Naive thymus-derived CD4-positive, alpha-beta T cell (primary cell): ENCODE measurements at regions of chr20 and their contacts with region 1.

Region 1: GRCh38 chr20:45934586-45935415 is at the start of gene PCIF1:
- DNase-seq: peak; percentile 98 to 99 (median 99)
- ATAC-seq: peak; percentile 87
- H3K4me3 ChIP-seq: peak within 1 kb of the TSS; percentile 96
- H3K4me3 Mint-ChIP-seq: peak within 1 kb of the TSS; percentile 85 to 99 (median 98)
- H3K27ac ChIP-seq: peak within 1 kb of the TSS; percentile 96
- H3K27ac Mint-ChIP-seq: peak within 1 kb of the TSS; percentile 95 to 99 (median 98)
- H3K4me1 ChIP-seq: peaks cover 10 to 21% of the 10 kb centered on the region in 2 donors
- H3K4me1 Mint-ChIP-seq: peaks cover 8 to 37% (median 33%) of the 10 kb centered on the region in 7 donors
- H3K27me3 ChIP-seq: no peaks in the 10 kb centered on the region
- H3K27me3 Mint-ChIP-seq: no peaks in the 10 kb centered on the region
- total RNA-seq, gene PCIF1: 42.3 to 79.6 (median 67.0) TPM

Region 2: DNA sequence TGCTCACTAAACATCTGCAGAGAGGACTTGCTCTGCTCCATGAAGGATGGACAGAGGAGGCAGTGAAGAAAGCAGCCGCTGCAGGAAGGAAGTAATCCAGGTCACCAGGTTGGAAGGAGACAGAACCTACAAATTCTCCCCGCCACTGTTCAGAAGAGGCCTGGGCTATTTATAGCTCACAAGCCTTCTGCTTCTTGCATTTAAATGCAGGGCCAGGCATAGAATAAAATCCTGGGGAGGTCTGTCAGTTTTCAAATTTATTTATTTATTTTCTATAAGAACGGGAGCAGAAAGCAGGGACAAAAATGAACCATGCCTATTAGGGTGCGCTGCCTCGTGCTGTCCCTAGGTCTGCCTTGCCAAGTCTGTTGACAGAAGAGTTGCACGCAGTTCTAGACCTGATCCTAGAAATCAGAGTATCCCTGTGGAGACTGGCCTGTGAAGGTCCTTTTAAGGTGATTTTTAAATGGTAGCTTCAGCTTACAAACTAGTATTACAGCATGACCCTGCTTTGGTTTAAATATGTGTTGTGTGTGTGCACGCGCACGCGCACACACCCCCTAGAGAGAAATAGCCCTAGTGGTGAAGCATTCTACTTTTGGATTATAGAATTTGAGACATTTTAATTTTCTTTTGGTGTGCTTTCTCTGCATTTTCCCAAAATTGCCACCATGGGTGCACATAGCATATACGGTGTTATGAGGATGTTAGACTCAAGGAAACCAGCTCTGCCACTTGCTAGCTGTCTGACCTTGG is 1144.0 kb before region 1 on chr20:
- CTCF ChIA-PET with region 1: no interaction called
- POLR2A ChIA-PET with region 1: no interaction called
- intact Hi-C with region 1: no loop called
- DNase-seq: no peak
- ATAC-seq: no peak
- H3K4me3 ChIP-seq: no peak overlapping the region
- H3K4me3 Mint-ChIP-seq: no peak overlapping the region
- H3K27ac ChIP-seq: no peak overlapping the region
- H3K27ac Mint-ChIP-seq: no peak overlapping the region
- H3K4me1 ChIP-seq: no peaks in the 10 kb centered on the region
- H3K4me1 Mint-ChIP-seq: no peaks in the 10 kb centered on the region
- H3K27me3 ChIP-seq: no peaks in the 10 kb centered on the region
- H3K27me3 Mint-ChIP-seq: peaks cover 6 to 21% (median 15%) of the 10 kb centered on the region in 5 donors

Region 3: DNA sequence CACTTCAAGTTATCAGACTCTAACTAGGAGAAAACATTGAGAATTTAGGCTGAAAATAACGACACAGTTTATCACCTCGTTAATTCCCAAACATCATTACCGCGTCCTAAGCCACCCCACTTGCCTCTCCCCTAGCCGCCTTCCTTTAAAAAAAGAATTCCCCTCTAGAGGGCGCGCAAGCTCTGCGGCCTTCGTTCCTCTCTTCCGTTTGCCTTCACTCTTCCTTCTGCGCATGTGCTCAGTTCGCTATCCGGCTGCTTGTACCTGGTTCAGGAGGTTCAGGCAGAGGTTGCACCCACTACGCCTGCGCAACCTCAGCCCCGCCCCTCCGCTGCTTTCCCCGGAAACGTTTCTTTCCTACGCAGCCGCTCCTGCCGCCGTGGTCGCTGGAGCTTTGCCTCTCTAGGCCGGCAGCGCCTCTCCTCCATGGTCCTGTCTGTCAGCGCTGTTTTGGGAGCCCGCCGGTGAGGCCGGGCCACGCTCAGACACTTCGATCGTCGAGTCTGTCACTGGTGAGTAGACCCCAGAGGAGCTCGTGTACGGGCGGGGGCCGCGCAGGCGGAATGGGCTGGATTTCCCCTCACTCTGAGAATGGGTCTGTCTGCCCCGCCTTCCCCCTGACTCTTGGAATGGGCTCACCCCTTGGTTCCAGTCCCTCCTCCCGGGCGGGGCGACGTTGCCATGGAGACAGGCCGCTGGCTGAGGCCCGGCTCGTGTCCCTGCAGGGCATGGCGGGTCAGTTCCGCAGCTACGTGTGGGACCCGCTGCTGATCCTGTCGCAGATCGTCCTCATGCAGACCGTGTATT is 571.8 kb before region 1 on chr20 and contains the start of gene SYS1:
- CTCF ChIA-PET with region 1: no interaction called
- POLR2A ChIA-PET with region 1: interaction called, 4 read pairs
- intact Hi-C with region 1: loop called in 1 of 2 experiments (anchors 1 kb)
- DNase-seq: peak; percentile 97 to 99 (median 99)
- ATAC-seq: peak; percentile 90
- H3K4me3 ChIP-seq: peak within 1 kb of the TSS; percentile 92
- H3K4me3 Mint-ChIP-seq: peak within 1 kb of the TSS; percentile 83 to 100 (median 97)
- H3K27ac ChIP-seq: peak within 1 kb of the TSS; percentile 99
- H3K27ac Mint-ChIP-seq: peak within 1 kb of the TSS; percentile 92 to 100 (median 99)
- H3K4me1 ChIP-seq: peaks cover 24 to 30% of the 10 kb centered on the region in 2 donors
- H3K4me1 Mint-ChIP-seq: peaks cover 24 to 56% (median 47%) of the 10 kb centered on the region in 7 donors
- H3K27me3 ChIP-seq: no peaks in the 10 kb centered on the region
- H3K27me3 Mint-ChIP-seq: peaks cover 0 to 2% (median 0%) of the 10 kb centered on the region in 5 donors
- total RNA-seq, gene SYS1: 23.9 to 111 (median 67.1) TPM

Region 4: GRCh38 chr20:45812157-45813020 is 122.4 kb before region 1 on chr20 and contains the start of gene UBE2C:
- CTCF ChIA-PET with region 1: no interaction called
- POLR2A ChIA-PET with region 1: no interaction called
- intact Hi-C with region 1: loop called (anchors 1 to 2 kb)
- DNase-seq: peak; percentile 73 to 95 (median 92)
- ATAC-seq: peak; percentile 100
- H3K4me3 ChIP-seq: peak within 1 kb of the TSS; percentile 52
- H3K4me3 Mint-ChIP-seq: peak within 1 kb of the TSS; percentile 79 to 96 (median 84)
- H3K27ac ChIP-seq: peak within 1 kb of the TSS; percentile 63
- H3K27ac Mint-ChIP-seq: peak within 1 kb of the TSS; percentile 36 to 87 (median 71)
- H3K4me1 ChIP-seq: peaks cover 0 to 12% of the 10 kb centered on the region in 2 donors
- H3K4me1 Mint-ChIP-seq: peaks cover 3 to 42% (median 16%) of the 10 kb centered on the region in 7 donors
- H3K27me3 ChIP-seq: no peaks in the 10 kb centered on the region
- H3K27me3 Mint-ChIP-seq: no peaks in the 10 kb centered on the region
- total RNA-seq, gene UBE2C: 0.50 to 129 (median 0.75) TPM in 4 of 5 experiments, not detected in the other

Region 5: DNA sequence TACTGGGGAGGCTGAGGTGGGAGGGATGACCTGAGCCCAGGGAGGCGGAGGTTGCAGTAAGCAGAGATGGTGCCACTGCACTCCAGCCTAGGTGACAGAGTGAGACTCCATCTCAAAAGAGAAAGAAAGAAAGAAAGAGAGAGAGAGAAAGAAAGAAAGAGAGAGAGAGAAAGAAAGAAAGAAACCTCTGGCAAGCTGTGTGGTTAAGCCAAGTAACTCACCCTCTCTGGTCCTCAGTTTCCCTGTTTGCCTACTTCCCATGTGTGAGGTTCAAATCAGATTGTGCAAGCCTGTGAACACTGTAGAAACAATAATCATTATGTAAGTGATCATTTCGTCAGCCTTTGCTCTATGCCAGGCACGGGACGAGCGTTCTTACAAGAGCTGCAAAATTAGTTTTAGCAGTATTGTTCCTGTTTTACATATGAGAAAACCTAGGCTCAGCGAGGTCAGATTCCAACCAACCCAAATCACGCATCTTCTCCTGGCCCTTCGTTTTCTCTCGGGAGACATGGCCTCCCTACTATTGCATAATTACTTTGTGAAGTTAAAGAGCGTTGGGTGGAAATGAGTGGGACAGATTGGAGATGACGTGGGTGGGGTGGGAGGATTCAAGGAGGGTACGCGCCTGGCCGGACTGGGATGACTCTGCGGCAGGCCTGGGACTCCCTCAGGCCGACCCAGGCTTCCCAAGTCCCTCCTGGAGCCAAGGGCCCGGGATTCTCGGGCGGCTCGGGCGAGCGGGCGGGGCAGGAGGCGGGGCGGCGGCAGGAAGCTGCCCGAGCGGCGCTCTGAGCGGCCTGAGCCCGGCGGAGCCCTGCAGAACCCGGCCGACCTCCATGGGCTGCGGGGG is 101.5 kb before region 1 on chr20 and contains the start of gene SNX21:
- CTCF ChIA-PET with region 1: no interaction called
- POLR2A ChIA-PET with region 1: no interaction called
- intact Hi-C with region 1: no loop called
- DNase-seq: peak in 6 of 9 donors; percentile 20 to 44 (median 22)
- ATAC-seq: peak; percentile 68
- H3K4me3 ChIP-seq: peak within 1 kb of the TSS; percentile 61
- H3K4me3 Mint-ChIP-seq: peak within 1 kb of the TSS; percentile 81 to 95 (median 88)
- H3K27ac ChIP-seq: peak within 1 kb of the TSS; percentile 59
- H3K27ac Mint-ChIP-seq: peak within 1 kb of the TSS in 8 of 9 donors; percentile 26 to 90 (median 80)
- H3K4me1 ChIP-seq: peaks cover 4 to 5% of the 10 kb centered on the region in 2 donors
- H3K4me1 Mint-ChIP-seq: peaks cover 6 to 14% (median 9%) of the 10 kb centered on the region in 7 donors
- H3K27me3 ChIP-seq: no peaks in the 10 kb centered on the region
- H3K27me3 Mint-ChIP-seq: peaks cover 0 to 20% (median 0%) of the 10 kb centered on the region in 5 donors
- total RNA-seq, gene SNX21: 0.93 to 4.9 (median 1.5) TPM

Region 6: DNA sequence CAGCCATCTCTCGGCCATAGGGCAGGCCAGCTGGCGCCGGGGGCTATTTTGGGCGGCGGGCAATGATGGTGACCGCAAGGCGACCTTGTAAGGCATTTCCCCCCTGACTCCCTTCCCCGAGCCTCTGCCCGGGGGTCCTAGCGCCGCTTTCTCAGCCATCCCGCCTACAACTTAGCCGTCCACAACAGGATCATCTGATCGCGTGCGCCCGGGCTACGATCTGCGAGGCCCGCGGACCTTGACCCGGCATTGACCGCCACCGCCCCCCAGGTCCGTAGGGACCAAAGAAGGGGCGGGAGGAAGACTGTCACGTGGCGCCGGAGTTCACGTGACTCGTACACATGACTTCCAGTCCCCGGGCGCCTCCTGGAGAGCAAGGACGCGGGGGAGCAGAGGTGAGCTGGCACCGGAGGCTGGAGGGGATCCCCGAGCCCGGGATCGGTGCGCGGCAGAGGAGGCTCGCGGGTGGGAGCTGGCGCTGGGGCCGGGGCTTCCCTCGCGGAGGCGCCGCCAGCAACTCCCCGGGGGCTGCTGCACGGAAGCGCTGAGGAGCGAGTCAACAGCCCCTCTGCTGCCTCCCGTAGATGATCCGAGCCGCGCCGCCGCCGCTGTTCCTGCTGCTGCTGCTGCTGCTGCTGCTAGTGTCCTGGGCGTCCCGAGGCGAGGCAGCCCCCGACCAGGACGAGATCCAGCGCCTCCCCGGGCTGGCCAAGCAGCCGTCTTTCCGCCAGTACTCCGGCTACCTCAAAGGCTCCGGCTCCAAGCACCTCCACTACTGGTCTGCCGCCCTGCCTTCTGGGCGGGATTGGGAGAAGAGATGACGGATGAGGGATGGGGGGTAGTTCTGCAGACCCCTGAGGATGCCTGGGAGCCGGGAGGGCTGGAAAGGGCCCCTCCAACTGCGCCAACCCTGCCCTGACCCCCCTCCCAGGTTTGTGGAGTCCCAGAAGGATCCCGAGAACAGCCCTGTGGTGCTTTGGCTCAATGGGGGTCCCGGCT is 43.5 kb before region 1 on chr20 and contains the starts of genes CTSA and NEURL2:
- CTCF ChIA-PET with region 1: interaction called, 8 read pairs
- POLR2A ChIA-PET with region 1: interaction called, 65 read pairs
- intact Hi-C with region 1: loop called (anchors 1 kb)
- DNase-seq: peak; percentile 62 to 90 (median 83)
- ATAC-seq: peak; percentile 87
- H3K4me3 ChIP-seq: peak within 1 kb of the TSS; percentile 96
- H3K4me3 Mint-ChIP-seq: peak within 1 kb of the TSS; percentile 88 to 95 (median 93)
- H3K27ac ChIP-seq: peak within 1 kb of the TSS; percentile 76
- H3K27ac Mint-ChIP-seq: peak within 1 kb of the TSS; percentile 85 to 97 (median 90)
- H3K4me1 ChIP-seq: peaks cover 22 to 25% of the 10 kb centered on the region in 2 donors
- H3K4me1 Mint-ChIP-seq: peaks cover 17 to 37% (median 26%) of the 10 kb centered on the region in 7 donors
- H3K27me3 ChIP-seq: no peaks in the 10 kb centered on the region
- H3K27me3 Mint-ChIP-seq: no peaks in the 10 kb centered on the region
- total RNA-seq, gene CTSA: 60.5 to 151 (median 65.1) TPM
- total RNA-seq, gene NEURL2: 1.2 to 5.3 (median 4.0) TPM

Region 7: GRCh38 chr20:45946149-45946970 is 11.6 kb after region 1 on chr20:
- CTCF ChIA-PET with region 1: no interaction called
- POLR2A ChIA-PET with region 1: interaction called, 55 read pairs
- intact Hi-C with region 1: no loop called
- DNase-seq: no peak
- ATAC-seq: peak; percentile 72
- H3K4me3 ChIP-seq: no peak overlapping the region
- H3K4me3 Mint-ChIP-seq: peak overlapping the region in 1 of 10 donors; percentile 25
- H3K27ac ChIP-seq: no peak overlapping the region
- H3K27ac Mint-ChIP-seq: peak overlapping the region in 4 of 9 donors; percentile 7 to 62 (median 47)
- H3K4me1 ChIP-seq: no peaks in the 10 kb centered on the region
- H3K4me1 Mint-ChIP-seq: peaks cover 0 to 13% (median 0%) of the 10 kb centered on the region in 7 donors
- H3K27me3 ChIP-seq: no peaks in the 10 kb centered on the region
- H3K27me3 Mint-ChIP-seq: no peaks in the 10 kb centered on the region

Region 8: DNA sequence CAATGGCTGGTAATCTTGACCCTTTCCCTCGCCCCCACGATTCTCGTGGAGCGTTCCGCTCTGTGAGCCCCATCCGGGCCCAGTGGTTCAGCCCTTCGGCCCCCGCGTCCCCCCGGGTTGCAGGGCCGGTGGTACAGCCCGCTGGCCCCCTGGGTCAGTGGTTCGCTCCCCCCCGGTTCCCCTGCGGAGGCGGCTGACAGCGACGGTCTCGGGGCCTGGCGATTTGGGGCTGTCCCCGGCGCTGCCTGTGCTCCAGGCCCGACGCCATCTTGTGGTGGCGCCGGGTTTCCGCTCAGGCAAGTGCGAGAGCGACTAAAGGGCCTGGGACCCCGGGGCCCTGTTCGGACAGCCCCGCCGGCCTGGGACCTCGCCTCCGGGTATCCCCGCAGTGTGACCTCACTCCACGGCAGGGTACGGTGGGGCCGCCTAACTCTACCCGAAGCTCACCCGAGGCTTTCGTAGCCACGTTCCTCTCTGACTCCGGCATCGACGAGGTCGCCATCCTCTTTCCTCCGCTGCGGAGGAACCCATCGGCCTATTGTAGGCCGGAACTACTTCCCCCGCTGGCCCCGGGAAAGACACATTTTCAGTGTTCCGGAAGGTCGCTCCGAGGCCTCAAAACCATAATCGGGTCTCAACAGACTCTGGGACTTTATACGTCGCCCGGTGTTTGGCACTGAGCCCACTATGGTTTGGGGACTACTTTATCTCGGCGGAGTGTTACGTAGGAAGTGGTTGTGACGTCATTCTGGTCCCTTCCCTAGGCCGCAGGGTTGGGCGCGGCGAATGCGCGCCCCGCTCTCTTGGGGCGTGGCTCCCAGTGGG is 37.1 kb after region 1 on chr20 and contains the start of gene ZNF335:
- CTCF ChIA-PET with region 1: interaction called, 54 read pairs
- POLR2A ChIA-PET with region 1: interaction called, 174 read pairs
- intact Hi-C with region 1: loop called (anchors 1 kb)
- DNase-seq: peak; percentile 89 to 99 (median 96)
- ATAC-seq: peak; percentile 89
- H3K4me3 ChIP-seq: peak within 1 kb of the TSS; percentile 74
- H3K4me3 Mint-ChIP-seq: peak within 1 kb of the TSS; percentile 80 to 100 (median 92)
- H3K27ac ChIP-seq: peak within 1 kb of the TSS; percentile 98
- H3K27ac Mint-ChIP-seq: peak within 1 kb of the TSS; percentile 99 to 100 (median 100)
- H3K4me1 ChIP-seq: peaks cover 24 to 26% of the 10 kb centered on the region in 2 donors
- H3K4me1 Mint-ChIP-seq: peaks cover 17 to 27% (median 24%) of the 10 kb centered on the region in 7 donors
- H3K27me3 ChIP-seq: no peaks in the 10 kb centered on the region
- H3K27me3 Mint-ChIP-seq: peaks cover 0 to 14% (median 0%) of the 10 kb centered on the region in 5 donors
- total RNA-seq, gene ZNF335: 39.9 to 95.2 (median 53.8) TPM

Region 9: GRCh38 chr20:46070215-46070900 is 135.6 kb after region 1 on chr20:
- CTCF ChIA-PET with region 1: no interaction called
- POLR2A ChIA-PET with region 1: no interaction called
- intact Hi-C with region 1: no loop called
- DNase-seq: no peak
- ATAC-seq: no peak
- H3K4me3 ChIP-seq: no peak overlapping the region
- H3K4me3 Mint-ChIP-seq: no peak overlapping the region
- H3K27ac ChIP-seq: no peak overlapping the region
- H3K27ac Mint-ChIP-seq: no peak overlapping the region
- H3K4me1 ChIP-seq: no peaks in the 10 kb centered on the region
- H3K4me1 Mint-ChIP-seq: peaks cover under 1 to 9% (median 8%) of the 10 kb centered on the region in 7 donors
- H3K27me3 ChIP-seq: no peaks in the 10 kb centered on the region
- H3K27me3 Mint-ChIP-seq: no peaks in the 10 kb centered on the region

Region 10: GRCh38 chr20:46157625-46158024 is 222.8 kb after region 1 on chr20:
- CTCF ChIA-PET with region 1: no interaction called
- POLR2A ChIA-PET with region 1: no interaction called
- intact Hi-C with region 1: no loop called
- DNase-seq: no peak
- ATAC-seq: no peak
- H3K4me3 ChIP-seq: no peak overlapping the region
- H3K4me3 Mint-ChIP-seq: no peak overlapping the region
- H3K27ac ChIP-seq: no peak overlapping the region
- H3K27ac Mint-ChIP-seq: no peak overlapping the region
- H3K4me1 ChIP-seq: no peaks in the 10 kb centered on the region
- H3K4me1 Mint-ChIP-seq: no peaks in the 10 kb centered on the region
- H3K27me3 ChIP-seq: no peaks in the 10 kb centered on the region
- H3K27me3 Mint-ChIP-seq: peaks cover 2 to 25% (median 15%) of the 10 kb centered on the region in 5 donors

Region 11: GRCh38 chr20:46363800-46364634 is 429.2 kb after region 1 on chr20:
- CTCF ChIA-PET with region 1: no interaction called
- POLR2A ChIA-PET with region 1: no interaction called
- intact Hi-C with region 1: loop called in 1 of 2 experiments (anchors 1 kb)
- DNase-seq: peak; percentile 80 to 91 (median 85)
- ATAC-seq: peak; percentile 87
- H3K4me3 ChIP-seq: peak overlapping the region; percentile 95
- H3K4me3 Mint-ChIP-seq: peak overlapping the region; percentile 89 to 98 (median 92)
- H3K27ac ChIP-seq: peak overlapping the region; percentile 99
- H3K27ac Mint-ChIP-seq: peak overlapping the region; percentile 77 to 98 (median 95)
- H3K4me1 ChIP-seq: peaks cover 60 to 67% of the 10 kb centered on the region in 2 donors
- H3K4me1 Mint-ChIP-seq: peaks cover 54 to 92% (median 74%) of the 10 kb centered on the region in 7 donors
- H3K27me3 ChIP-seq: no peaks in the 10 kb centered on the region
- H3K27me3 Mint-ChIP-seq: no peaks in the 10 kb centered on the region